Mucosa of descending colon (tissue), 3 donors: ENCODE measurements at regions of chr7 and their contacts with region 1.

Region 1: DNA sequence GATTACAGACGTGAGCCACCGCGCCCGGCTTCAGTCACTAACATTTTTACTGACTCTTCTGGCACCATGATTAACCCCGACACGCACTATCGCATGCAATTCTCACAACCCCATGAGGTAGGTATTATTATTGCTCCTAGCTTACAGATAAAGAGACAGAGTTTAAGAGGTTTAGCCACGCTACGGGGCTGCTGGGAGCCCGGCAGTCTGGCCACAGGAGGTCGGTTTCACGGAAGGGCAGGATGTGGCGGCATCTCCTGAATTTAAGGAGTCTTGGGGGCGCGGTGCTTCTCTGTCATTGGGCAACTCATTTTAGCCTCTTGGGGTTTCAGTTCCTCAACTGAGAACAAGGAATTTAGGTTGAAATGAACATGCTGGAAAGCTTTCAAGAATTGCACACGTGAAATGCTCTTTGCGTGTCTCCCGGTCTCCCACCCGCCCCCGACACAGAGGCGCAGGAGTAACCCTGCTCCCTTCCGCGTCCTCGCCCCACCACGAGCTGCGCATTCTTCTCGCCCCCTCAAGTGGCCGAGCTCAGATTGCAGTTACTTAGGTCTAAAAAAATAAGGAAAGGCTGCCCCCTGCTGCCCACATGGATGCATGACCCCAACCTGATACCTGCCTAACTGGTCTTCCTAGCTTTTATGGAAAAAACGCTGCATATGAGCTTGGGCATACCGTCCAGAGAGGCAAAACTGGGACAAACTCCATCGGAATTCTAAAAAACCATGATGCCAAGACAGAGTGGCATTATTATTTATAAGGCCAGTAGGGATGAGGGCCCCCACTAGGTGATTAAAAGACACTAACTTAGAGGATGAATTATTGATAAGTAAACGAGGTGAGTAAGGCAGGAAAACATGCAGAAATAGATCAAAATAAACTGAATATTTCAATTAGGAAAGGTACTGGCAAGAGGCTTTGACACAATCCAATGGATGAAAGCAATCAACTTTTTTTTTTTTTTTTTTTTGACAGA is 12.4 kb downstream of the PRSS2 start:
- DNase-seq: peak; percentile 86 to 93 (median 88)
- ATAC-seq: peak; percentile 94
- H3K4me3 ChIP-seq: no peak overlapping the region
- H3K4me1 ChIP-seq: no peaks in the 10 kb centered on the region
- CTCF ChIP-seq: no peak

Region 2: GRCh38 chr7:142603870-142604448 is 179.3 kb before region 1 on chr7:
- intact Hi-C with region 1: loop called in 1 of 2 experiments (anchors 10 kb)
- DNase-seq: peak in 1 of 3 donors; percentile 69
- ATAC-seq: peak; percentile 51
- H3K4me3 ChIP-seq: no peak overlapping the region
- H3K4me1 ChIP-seq: peaks cover 2% of the 10 kb centered on the region
- CTCF ChIP-seq: peak; percentile 55

Region 3: DNA sequence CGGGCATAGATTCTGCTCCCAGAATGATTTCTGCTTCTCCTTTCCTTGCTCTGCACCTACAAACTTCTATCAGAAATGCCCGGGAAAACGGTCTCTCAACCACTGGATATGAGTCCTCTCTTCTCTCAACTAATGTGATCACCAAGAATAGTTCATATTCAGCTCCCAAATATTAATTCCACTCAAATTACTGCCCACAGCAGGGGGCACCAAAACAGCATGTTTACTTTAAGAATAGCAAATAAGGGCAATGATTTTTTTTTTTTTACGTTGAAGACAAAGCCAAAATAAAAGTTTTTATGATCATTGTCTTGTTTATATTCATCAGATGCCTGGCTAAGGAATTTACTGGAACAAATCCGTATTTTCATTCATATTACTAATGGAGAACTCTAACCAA is 128.8 kb before region 1 on chr7:
- intact Hi-C with region 1: loop called in 1 of 2 experiments (anchors 10 kb)
- DNase-seq: peak in 1 of 3 donors; percentile 7
- ATAC-seq: no peak
- H3K4me3 ChIP-seq: no peak overlapping the region
- H3K4me1 ChIP-seq: no peaks in the 10 kb centered on the region
- CTCF ChIP-seq: no peak